ENCODE measurements at regions of chr9 and their contacts with region 1.

Region 1: GRCh38 chr9:33076358-33077004 is at the start of gene SMU1:
- DNase-seq: peak; percentile 95

Region 2: DNA sequence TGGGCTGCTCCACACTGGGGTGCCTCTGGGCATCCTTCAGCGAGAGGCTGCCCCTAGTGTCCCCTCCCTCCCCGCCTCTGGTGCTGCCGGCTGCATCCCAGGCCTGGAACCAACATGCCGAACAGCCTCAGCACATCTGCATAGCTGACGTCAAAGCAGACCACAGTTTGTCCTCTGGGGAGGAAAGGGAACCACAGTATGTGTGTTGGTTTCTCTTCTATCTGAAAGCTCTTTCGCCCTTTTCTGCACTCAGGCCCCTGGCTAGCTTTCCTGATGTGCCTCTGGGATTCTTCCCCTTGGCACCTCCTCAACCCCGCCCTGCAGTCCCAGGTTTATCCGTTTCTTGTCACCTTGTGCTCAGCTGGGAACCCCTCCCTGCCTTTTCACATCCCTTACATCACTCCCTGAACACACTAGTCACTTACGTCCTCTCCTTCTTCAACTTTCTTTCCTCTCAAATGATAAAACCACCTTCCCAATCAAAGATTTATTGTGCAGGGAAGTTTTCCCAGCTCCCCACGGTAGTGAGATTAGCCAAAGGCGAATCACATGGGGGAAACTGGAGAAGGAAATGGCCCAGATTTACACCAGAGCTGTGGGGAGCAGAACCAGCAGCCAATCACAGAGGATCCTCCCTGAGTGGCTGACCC is 126.2 kb after region 1 on chr9:
- in situ Hi-C with region 1: loop called (anchors 25 kb)
- DNase-seq: no peak

Region 3: GRCh38 chr9:33249087-33249657 is 172.7 kb after region 1 on chr9:
- in situ Hi-C with region 1: no loop called
- DNase-seq: no peak

Measured in ACHN (cell line).